ENCODE measurements at regions of chr14 and their contacts with region 1.

Region 1: GRCh38 chr14:49633640-49634546 is 1.2 kb downstream of the DNAAF2 start:
- DNase-seq: peak; percentile 94
- CTCF ChIP-seq: peak; percentile 90

Region 2: GRCh38 chr14:49226975-49227374 is 406.9 kb before region 1 on chr14:
- in situ Hi-C with region 1: no loop called
- DNase-seq: no peak
- CTCF ChIP-seq: no peak

Region 3: DNA sequence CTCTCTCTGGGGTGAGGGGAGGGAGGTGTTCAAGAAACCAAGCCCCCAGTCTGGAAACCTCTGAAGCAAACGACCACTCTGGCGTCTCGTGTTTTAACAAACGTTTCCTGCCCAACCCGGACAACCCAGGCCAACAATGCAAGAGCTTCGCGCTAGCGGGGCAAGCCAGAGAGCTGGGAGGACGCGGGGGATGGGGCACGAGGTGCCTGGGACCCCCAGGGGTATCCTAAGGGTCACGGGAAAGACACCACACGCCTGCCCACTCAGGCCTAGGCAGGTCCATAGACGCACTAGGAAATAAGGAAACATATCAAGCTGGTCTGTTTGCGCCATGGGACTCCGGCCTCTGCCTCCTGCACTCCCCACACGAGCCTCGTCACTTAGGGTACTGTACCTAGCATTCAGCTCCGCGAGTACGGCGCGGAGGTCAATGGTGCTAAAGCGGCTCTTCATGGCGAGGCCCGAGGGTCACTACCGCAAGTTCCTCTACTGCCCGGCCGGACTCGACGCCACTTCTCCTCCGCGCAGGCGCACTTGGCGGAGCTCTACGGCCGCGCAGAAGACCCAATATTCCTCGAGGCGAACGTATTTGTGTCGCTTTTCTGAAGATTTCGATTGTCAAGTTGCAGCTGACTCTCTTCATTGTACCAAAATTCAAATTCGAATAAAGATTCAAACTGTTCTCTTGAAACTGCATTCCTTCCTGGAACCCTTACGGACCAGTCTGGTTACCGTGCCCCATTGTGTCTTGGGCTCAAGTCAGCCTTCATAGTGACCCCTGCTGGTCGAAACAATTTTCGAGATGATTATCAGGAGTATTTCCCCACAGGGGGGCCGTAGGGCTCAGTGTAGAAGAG is 218.6 kb after region 1 on chr14 and contains the start of gene NEMF:
- in situ Hi-C with region 1: loop called (anchors 25 kb)
- DNase-seq: peak; percentile 84
- CTCF ChIP-seq: peak; percentile 60

Region 4: DNA sequence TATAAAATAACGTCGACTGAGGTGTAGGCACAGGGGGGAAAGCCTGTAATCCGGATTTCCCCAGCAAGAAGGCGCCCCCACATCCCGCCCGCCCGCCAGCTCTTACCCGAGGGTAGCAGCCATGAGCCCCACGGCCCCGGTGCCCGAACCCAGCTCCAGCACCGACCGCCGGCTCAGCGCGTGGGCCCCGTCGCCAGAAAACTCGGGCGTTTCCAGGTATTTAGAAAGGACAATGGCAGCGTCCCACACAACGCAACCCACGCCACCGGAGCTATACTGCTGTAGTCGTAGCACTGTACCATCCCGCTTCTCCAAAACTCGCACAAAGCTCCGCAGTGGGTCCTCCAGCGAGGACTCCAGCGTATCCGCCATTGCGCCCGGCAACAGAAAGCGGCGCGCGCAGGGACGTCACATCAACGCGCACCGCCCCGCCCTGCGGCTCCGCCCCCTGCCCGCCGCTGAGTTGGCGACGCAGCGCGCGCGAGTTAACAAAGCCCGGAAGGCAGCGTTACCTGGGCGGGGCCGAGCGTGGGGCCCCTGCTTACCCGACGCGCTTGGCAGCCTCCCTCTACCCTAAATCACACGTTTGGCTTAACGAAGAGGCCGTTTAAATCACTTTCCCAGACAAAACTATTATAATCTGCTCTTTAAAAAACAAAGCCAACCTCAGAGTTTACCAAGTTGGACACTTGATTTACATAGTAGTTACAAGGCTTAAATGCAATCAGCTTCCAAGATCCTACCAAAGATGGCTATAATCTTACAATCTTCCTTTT is 482.5 kb after region 1 on chr14 and contains the start of gene VCPKMT:
- in situ Hi-C with region 1: loop called (anchors 25 kb)
- DNase-seq: peak; percentile 94
- CTCF ChIP-seq: no peak

Measured in GM13976 (cell line).